ENCODE measurements at regions of chr19 and their contacts with region 1.

Region 1: DNA sequence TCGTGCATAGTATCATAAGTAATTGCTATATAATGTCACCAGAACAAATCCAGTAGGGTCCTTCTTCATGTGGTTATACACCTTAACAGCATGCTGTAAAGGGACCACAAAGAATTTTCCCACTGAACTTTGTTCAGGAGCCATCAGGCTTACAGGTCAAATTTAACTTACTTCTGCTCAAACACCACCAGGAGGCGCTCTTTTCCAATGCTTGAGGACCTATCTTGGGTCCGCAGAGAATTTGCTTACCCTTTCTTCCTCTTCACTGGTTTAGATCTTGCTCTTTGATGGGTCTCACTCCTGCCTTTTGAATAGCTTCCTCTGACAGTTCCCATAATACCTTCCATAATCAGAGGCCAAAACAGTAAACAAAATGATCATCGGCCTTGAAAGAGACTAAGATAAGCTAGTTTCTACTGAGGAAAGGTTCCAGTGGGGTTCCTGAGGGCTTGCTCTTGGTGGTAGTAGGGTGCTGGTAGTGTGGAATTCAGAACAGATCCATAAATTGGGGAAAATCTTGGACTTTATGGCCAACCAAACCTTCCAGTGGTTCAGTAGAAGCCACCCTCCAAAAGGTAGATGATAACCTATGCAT is 37.4 kb downstream of the SCGB2B2 start:
- DNase-seq: peak; percentile 88
- H3K4me3 Mint-ChIP-seq: no peak overlapping the region
- H3K27ac Mint-ChIP-seq: no peak overlapping the region
- H3K4me1 Mint-ChIP-seq: peaks cover 3% of the 10 kb centered on the region
- H3K27me3 Mint-ChIP-seq: no peaks in the 10 kb centered on the region

Region 2: DNA sequence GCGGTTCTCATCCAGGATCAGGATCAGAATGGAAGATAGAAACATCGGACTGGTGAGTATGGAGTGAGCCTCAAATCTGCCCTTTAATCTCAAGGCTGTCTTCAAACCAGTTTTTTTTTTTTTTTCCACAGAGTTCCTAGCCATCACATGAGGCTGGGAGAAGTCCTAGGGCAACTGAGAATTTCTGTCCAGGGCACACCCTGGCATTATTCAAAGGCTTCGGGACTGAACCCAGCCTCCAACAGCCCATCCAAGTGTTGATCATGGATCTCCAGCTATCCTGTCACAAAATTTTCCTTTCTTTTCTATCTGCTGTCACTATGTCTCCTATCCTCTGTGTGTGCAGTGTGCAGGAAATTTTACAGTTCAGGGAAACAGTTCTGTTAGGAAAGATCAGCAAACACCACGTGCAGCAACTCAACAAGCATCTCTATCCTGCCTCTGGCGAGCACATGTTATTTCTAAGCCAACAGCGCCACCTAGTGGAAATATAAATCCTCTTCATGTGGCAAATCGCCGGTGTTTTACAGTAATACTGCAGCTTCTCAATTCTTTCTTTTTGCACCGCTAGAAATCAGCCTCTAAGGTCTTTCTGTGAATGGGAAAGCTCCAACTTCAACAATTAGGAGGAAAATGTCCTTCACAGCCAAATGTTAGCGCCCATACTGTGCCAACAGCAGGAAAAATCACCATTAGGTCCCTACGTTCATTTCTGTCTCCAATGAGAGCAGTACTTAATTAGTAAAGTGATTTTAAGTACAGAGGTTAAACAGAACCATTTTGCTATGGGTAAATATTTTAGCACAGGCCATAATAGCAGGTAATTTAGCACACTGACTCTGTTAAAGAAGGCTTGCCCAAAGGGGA is 73.0 kb after region 1 on chr19:
- intact Hi-C with region 1: loop called (anchors 1 kb)
- DNase-seq: peak; percentile 90
- H3K4me3 Mint-ChIP-seq: no peak overlapping the region
- H3K27ac Mint-ChIP-seq: no peak overlapping the region
- H3K4me1 Mint-ChIP-seq: no peaks in the 10 kb centered on the region
- H3K27me3 Mint-ChIP-seq: peaks cover 2% of the 10 kb centered on the region

Region 3: GRCh38 chr19:35124098-35125060 is 484.8 kb after region 1 on chr19:
- intact Hi-C with region 1: no loop called
- DNase-seq: peak; percentile 96
- H3K4me3 Mint-ChIP-seq: peak overlapping the region; percentile 78
- H3K27ac Mint-ChIP-seq: peak overlapping the region; percentile 83
- H3K4me1 Mint-ChIP-seq: peaks cover 11% of the 10 kb centered on the region
- H3K27me3 Mint-ChIP-seq: peaks cover 5% of the 10 kb centered on the region